CD4-positive, alpha-beta T cell (primary cell): ENCODE measurements at regions of chr12 and their contacts with region 1.

Region 1: GRCh38 chr12:96061864-96062453 is 26.6 kb upstream of the LTA4H start:
- DNase-seq: peak; percentile 64 to 90 (median 70)
- ATAC-seq: peak; percentile 90
- H3K4me3 ChIP-seq: no peak overlapping the region
- H3K4me3 Mint-ChIP-seq: no peak overlapping the region
- H3K27ac ChIP-seq: no peak overlapping the region
- H3K27ac Mint-ChIP-seq: no peak overlapping the region
- H3K4me1 ChIP-seq: peaks cover 18% of the 10 kb centered on the region
- H3K4me1 Mint-ChIP-seq: peaks cover 27% of the 10 kb centered on the region
- H3K27me3 ChIP-seq: no peaks in the 10 kb centered on the region
- H3K27me3 Mint-ChIP-seq: no peaks in the 10 kb centered on the region
- CTCF ChIP-seq: peak; percentile 85

Region 2: DNA sequence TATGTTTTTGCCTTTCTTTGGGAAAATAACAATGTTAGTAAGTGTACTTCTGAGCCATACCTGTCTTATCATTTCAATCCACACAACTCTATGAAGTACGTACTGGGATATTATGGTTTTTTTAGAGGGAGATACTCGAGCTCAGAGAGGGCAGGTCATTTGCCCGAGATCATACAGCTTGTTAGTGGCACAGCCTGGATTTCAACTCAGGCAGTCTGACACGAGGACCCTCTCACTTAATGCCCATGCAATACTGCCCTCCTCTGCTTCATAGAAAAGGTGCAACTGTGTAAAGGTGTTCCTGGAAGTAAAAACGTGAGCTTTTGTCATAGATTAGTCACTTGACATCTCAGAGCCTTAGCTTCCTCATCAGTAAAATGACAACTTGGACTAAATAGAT is 1186.4 kb before region 1 on chr12:
- CTCF ChIA-PET with region 1: no interaction called
- POLR2A ChIA-PET with region 1: no interaction called
- intact Hi-C with region 1: no loop called
- DNase-seq: peak in 3 of 14 experiments; percentile 6 to 29 (median 21)
- ATAC-seq: peak; percentile 48
- H3K4me3 ChIP-seq: no peak overlapping the region
- H3K4me3 Mint-ChIP-seq: no peak overlapping the region
- H3K27ac ChIP-seq: no peak overlapping the region
- H3K27ac Mint-ChIP-seq: no peak overlapping the region
- H3K4me1 ChIP-seq: peaks cover 18% of the 10 kb centered on the region
- H3K4me1 Mint-ChIP-seq: peaks cover 18% of the 10 kb centered on the region
- H3K27me3 ChIP-seq: peaks cover 45 to 54% of the 10 kb centered on the region in 2 experiments
- H3K27me3 Mint-ChIP-seq: peaks cover 82% of the 10 kb centered on the region
- CTCF ChIP-seq: no peak

Region 3: DNA sequence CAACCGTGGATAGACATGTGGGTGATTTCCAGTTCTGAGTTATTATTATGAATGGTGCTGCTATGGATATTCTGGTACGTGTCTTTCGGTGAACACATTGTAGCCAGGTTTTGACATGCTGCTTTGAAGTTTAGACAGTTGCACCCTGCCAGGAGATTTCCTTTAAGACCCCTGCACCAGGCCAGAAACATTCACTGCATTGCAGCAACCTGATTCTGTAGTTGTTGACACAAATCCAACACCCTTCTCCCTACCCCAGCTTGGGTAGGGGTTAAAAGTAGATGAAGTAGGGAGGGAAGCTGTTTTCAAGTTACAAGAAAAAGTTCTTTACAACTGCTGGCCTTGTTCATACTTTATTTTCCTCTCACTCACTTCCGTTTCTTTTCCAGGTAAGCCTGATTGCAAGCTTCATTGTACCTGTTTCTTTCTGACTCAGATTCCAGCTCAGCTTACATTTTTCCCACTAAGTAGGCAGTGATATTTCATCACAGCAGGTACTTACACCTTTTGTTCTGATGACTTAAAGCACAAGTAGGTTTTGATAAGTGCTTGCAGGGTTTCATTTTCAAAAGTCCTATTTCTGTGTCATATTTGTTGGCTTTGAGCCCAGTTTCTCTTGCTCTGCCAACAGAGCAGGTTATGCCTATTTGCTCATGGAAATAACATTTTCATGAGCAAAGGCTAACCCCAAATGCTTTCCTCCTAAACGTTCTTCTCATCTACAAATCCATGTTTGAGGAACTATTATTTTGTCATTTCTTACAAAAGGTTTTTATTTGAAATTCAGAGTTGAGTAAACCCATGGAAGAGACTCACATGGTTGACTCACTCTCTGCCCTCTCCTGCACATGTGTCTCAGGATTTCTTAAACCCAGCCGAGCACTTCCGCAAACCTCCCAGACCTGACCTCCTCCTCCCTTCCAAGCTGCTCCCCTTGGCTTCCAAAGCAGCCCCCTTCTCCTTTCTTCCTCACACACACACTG is 14.4 kb before region 1 on chr12:
- CTCF ChIA-PET with region 1: no interaction called
- POLR2A ChIA-PET with region 1: no interaction called
- intact Hi-C with region 1: no loop called
- DNase-seq: peak in 4 of 14 experiments; percentile 21 to 65 (median 58)
- ATAC-seq: peak; percentile 65
- H3K4me3 ChIP-seq: peak overlapping the region; percentile 14
- H3K4me3 Mint-ChIP-seq: peak overlapping the region; percentile 77
- H3K27ac ChIP-seq: peak overlapping the region; percentile 0 to 36
- H3K27ac Mint-ChIP-seq: peak overlapping the region; percentile 82
- H3K4me1 ChIP-seq: peaks cover 48% of the 10 kb centered on the region
- H3K4me1 Mint-ChIP-seq: peaks cover 44% of the 10 kb centered on the region
- H3K27me3 ChIP-seq: no peaks in the 10 kb centered on the region
- H3K27me3 Mint-ChIP-seq: no peaks in the 10 kb centered on the region
- CTCF ChIP-seq: no peak

Region 4: GRCh38 chr12:96083020-96083719 is 21.2 kb after region 1 on chr12:
- CTCF ChIA-PET with region 1: no interaction called
- POLR2A ChIA-PET with region 1: no interaction called
- intact Hi-C with region 1: no loop called
- DNase-seq: no peak
- ATAC-seq: no peak
- H3K4me3 ChIP-seq: no peak overlapping the region
- H3K4me3 Mint-ChIP-seq: no peak overlapping the region
- H3K27ac ChIP-seq: no peak overlapping the region
- H3K27ac Mint-ChIP-seq: no peak overlapping the region
- H3K4me1 ChIP-seq: peaks cover 2% of the 10 kb centered on the region
- H3K4me1 Mint-ChIP-seq: no peaks in the 10 kb centered on the region
- H3K27me3 ChIP-seq: no peaks in the 10 kb centered on the region
- H3K27me3 Mint-ChIP-seq: no peaks in the 10 kb centered on the region
- CTCF ChIP-seq: no peak

Region 5: GRCh38 chr12:96132819-96133218 is 70.9 kb after region 1 on chr12:
- CTCF ChIA-PET with region 1: no interaction called
- POLR2A ChIA-PET with region 1: no interaction called
- intact Hi-C with region 1: loop called (anchors 1 to 10 kb)
- DNase-seq: peak in 7 of 14 experiments; percentile 4 to 48 (median 33)
- ATAC-seq: no peak
- H3K4me3 ChIP-seq: no peak overlapping the region
- H3K4me3 Mint-ChIP-seq: no peak overlapping the region
- H3K27ac ChIP-seq: no peak overlapping the region
- H3K27ac Mint-ChIP-seq: no peak overlapping the region
- H3K4me1 ChIP-seq: peaks cover 9% of the 10 kb centered on the region
- H3K4me1 Mint-ChIP-seq: peaks cover 13% of the 10 kb centered on the region
- H3K27me3 ChIP-seq: no peaks in the 10 kb centered on the region
- H3K27me3 Mint-ChIP-seq: peaks cover 5% of the 10 kb centered on the region
- CTCF ChIP-seq: peak; percentile 14

Region 6: DNA sequence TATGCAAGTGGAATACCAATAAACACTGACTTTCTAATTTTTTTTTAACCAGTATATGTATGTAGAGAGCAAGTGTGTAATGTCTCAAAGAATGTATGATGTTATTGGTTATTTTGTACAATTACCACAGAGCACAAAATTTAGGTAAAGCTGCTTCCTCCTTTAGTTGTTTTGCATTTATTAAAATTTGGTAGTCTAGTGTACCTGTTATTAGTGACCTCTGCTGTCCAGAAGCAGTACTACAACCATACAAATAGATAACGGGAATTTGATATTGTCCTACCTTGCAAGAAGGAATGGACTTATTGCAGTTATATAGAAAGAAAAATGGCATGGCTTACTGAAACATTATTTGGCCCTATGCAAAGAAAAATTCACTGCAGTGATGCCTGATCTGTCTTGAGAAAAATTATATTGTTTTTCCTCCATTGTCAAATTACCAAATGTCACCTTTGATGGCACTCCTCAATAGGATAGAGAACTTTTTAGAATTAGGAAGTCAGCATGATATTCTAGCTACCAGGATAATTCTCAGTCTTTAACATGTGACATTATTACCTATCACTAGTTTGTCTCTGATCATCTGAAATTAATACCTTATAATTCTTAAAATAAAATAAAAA is 1246.7 kb after region 1 on chr12:
- CTCF ChIA-PET with region 1: no interaction called
- POLR2A ChIA-PET with region 1: no interaction called
- intact Hi-C with region 1: loop called in 1 of 2 experiments (anchors 5 kb)
- DNase-seq: peak in 3 of 14 experiments; percentile 57 to 73 (median 73)
- ATAC-seq: peak; percentile 48
- H3K4me3 ChIP-seq: no peak overlapping the region
- H3K4me3 Mint-ChIP-seq: no peak overlapping the region
- H3K27ac ChIP-seq: no peak overlapping the region
- H3K27ac Mint-ChIP-seq: no peak overlapping the region
- H3K4me1 ChIP-seq: no peaks in the 10 kb centered on the region
- H3K4me1 Mint-ChIP-seq: no peaks in the 10 kb centered on the region
- H3K27me3 ChIP-seq: peaks cover 0 to 4% of the 10 kb centered on the region in 2 experiments
- H3K27me3 Mint-ChIP-seq: peaks cover 6% of the 10 kb centered on the region
- CTCF ChIP-seq: peak; percentile 93